ENCODE measurements at regions of chr2 and their contacts with region 1.

Region 1: GRCh38 chr2:40511661-40512213 is 59.8 kb upstream of the SLC8A1 start:
- DNase-seq: peak; percentile 28
- ATAC-seq: peak; percentile 43 to 58

Region 2: GRCh38 chr2:39494784-39495251 is 1016.9 kb before region 1 on chr2:
- intact Hi-C with region 1: no loop called
- DNase-seq: peak; percentile 48
- ATAC-seq: peak; percentile 64 to 90

Region 3: DNA sequence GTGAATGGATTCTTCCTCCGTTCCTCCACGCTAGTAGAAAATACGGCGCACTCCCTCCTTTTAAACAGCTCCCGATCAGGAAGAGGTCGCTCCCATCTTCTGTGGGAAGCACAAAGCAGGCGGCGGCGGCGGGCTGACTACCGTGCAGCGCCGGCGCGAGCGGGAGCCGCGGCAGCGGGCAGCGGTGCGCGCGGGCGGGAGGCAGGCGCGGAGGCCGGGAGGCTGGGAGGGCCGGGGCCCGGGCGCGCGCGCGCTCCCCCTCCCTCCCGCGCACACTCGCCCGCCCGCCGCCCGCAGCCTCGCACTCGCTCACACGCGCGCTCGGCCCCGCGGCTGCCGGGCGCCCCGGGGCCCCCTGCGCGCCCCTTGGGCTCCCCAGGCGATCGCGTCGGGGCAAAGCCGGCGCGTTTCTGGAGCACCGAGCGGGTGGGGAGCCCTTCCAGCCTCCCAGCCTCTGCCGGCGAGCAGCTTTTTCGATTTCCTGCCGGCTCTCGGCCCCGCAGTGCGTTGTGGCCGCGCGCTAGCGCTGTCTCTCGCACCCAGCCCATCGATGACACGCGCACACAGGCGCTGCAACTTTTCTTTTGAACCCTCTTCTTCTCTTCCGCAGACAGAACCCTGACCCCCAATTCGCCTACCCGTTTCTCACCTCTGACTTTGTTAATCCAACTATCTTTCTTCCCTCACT is 59.7 kb before region 1 on chr2 and contains the start of gene SLC8A1:
- intact Hi-C with region 1: loop called in 1 of 2 experiments (anchors 5 kb)
- DNase-seq: peak; percentile 33
- ATAC-seq: peak; percentile 61 to 68
- total RNA-seq, gene SLC8A1: 590 to 696 TPM

Measured in left cardiac atrium (tissue), 4 donors.